ENCODE measurements at regions of chr12 and their contacts with region 1.

Region 1: GRCh38 chr12:11581179-11581755 is 68.2 kb upstream of the ETV6 start:
- DNase-seq: peak; percentile 13
- ATAC-seq: no peak
- H3K4me3 ChIP-seq: no peak overlapping the region
- H3K27ac ChIP-seq: no peak overlapping the region
- H3K4me1 ChIP-seq: no peaks in the 10 kb centered on the region
- H3K27me3 ChIP-seq: no peaks in the 10 kb centered on the region
- CTCF ChIP-seq: peak; percentile 45; the same call in 1 of the 2 replicates

Region 2: GRCh38 chr12:11075642-11076041 is 505.6 kb before region 1 on chr12:
- CTCF ChIA-PET with region 1: no interaction called
- POLR2A ChIA-PET with region 1: no interaction called
- in situ Hi-C with region 1: no loop called
- intact Hi-C with region 1: no loop called
- DNase-seq: no peak
- ATAC-seq: no peak
- H3K4me3 ChIP-seq: no peak overlapping the region
- H3K27ac ChIP-seq: no peak overlapping the region
- H3K4me1 ChIP-seq: no peaks in the 10 kb centered on the region
- H3K27me3 ChIP-seq: no peaks in the 10 kb centered on the region
- CTCF ChIP-seq: no peak

Region 3: GRCh38 chr12:11744083-11744801 is 163.0 kb after region 1 on chr12:
- CTCF ChIA-PET with region 1: interaction called, 11 read pairs
- POLR2A ChIA-PET with region 1: no interaction called
- in situ Hi-C with region 1: no loop called
- intact Hi-C with region 1: no loop called
- DNase-seq: no peak
- ATAC-seq: no peak
- H3K4me3 ChIP-seq: no peak overlapping the region
- H3K27ac ChIP-seq: no peak overlapping the region
- H3K4me1 ChIP-seq: peaks cover 9% of the 10 kb centered on the region
- H3K27me3 ChIP-seq: no peaks in the 10 kb centered on the region
- CTCF ChIP-seq: no peak

Region 4: GRCh38 chr12:11771356-11771755 is 190.1 kb after region 1 on chr12:
- CTCF ChIA-PET with region 1: no interaction called
- POLR2A ChIA-PET with region 1: interaction called, 10 read pairs
- in situ Hi-C with region 1: no loop called
- intact Hi-C with region 1: no loop called
- DNase-seq: no peak
- ATAC-seq: no peak
- H3K4me3 ChIP-seq: no peak overlapping the region
- H3K27ac ChIP-seq: no peak overlapping the region
- H3K4me1 ChIP-seq: no peaks in the 10 kb centered on the region
- H3K27me3 ChIP-seq: no peaks in the 10 kb centered on the region
- CTCF ChIP-seq: no peak

Region 5: DNA sequence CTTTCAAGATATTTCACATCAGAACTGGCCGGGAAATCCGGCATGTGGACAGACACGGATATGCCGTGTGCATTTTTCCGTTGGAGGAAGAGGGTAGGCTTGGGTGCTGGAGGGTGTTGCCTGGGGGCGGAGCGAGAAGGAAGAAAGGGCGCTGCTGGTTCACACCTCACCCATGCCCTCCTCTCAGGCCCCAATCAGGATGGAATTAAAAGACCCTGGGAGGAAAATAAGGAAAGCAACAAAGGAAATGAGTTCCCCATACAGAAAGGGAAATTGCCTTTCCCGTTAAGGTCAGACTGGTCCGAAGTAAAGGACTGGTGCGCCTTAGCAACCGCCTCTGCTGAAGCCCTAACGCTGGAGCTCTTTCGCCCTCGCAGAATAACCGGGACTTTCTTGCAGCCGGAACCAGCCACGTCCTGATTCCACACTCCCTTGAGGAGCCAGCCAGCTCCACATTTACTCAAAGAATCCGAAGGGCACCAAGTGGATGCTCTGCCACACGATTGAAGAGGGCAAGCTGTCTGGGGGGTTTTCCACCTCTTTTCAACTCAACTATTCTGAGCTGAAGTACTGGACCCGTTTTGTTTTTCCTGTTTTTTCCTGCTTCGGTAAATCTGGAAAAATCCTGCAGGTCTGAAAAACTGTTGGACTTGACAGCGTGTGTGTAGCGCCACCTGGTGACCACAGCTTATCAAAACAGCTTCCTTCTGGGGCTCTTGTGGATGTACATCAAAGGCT is 451.8 kb after region 1 on chr12:
- CTCF ChIA-PET with region 1: interaction called, 6 read pairs
- POLR2A ChIA-PET with region 1: no interaction called
- in situ Hi-C with region 1: no loop called
- intact Hi-C with region 1: loop called (anchors 1 kb)
- DNase-seq: peak; percentile 59
- ATAC-seq: peak; percentile 83
- H3K4me3 ChIP-seq: peak overlapping the region; percentile 20 to 53; a peak in 3 of 4 replicates
- H3K27ac ChIP-seq: no peak overlapping the region
- H3K4me1 ChIP-seq: no peaks in the 10 kb centered on the region
- H3K27me3 ChIP-seq: no peaks in the 10 kb centered on the region
- CTCF ChIP-seq: peak; percentile 85

Region 6: GRCh38 chr12:12704593-12705230 is 1123.4 kb after region 1 on chr12:
- CTCF ChIA-PET with region 1: no interaction called
- POLR2A ChIA-PET with region 1: no interaction called
- in situ Hi-C with region 1: no loop called
- intact Hi-C with region 1: loop called (anchors 10 kb)
- DNase-seq: no peak
- ATAC-seq: peak; percentile 99
- H3K4me3 ChIP-seq: no peak overlapping the region
- H3K27ac ChIP-seq: peak overlapping the region; percentile 42
- H3K4me1 ChIP-seq: peaks cover 6% of the 10 kb centered on the region
- H3K27me3 ChIP-seq: no peaks in the 10 kb centered on the region
- CTCF ChIP-seq: peak; percentile 91